ENCODE measurements at regions of chr11 and their contacts with region 1.

Region 1: DNA sequence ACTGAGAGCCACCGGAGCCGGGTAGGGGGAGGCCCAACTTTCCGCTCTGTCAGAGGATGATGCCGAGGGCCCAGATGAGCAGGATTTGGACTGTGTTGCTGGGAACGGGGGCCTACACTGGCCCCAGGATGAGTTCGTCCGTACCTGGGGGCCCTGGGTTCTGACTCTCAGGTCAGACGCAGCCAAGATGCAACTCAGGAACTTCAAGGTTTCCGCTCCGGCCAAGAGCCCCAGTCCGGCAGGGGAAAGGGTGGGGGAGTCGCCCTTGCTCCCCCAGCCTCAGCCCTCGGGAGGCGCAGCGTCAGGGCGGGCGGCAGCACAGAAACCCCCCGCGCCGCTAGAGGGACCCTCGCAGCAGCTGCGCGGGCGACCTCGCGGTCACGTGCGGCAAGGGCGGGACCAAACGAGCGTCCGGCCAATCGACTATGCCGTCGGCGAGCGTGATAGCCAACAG is 241 bp upstream of the ARL2 start:
- DNase-seq: peak; percentile 89 to 96 (median 93)
- H3K4me3 ChIP-seq: peak overlapping the region; percentile 60 to 99 (median 90)
- H3K27ac ChIP-seq: peak overlapping the region; percentile 90 to 100 (median 99)
- H3K27me3 ChIP-seq: no peaks in the 10 kb centered on the region
- CTCF ChIP-seq: peak in 44 of 56 donors; percentile 30 to 93 (median 74)

Region 2: DNA sequence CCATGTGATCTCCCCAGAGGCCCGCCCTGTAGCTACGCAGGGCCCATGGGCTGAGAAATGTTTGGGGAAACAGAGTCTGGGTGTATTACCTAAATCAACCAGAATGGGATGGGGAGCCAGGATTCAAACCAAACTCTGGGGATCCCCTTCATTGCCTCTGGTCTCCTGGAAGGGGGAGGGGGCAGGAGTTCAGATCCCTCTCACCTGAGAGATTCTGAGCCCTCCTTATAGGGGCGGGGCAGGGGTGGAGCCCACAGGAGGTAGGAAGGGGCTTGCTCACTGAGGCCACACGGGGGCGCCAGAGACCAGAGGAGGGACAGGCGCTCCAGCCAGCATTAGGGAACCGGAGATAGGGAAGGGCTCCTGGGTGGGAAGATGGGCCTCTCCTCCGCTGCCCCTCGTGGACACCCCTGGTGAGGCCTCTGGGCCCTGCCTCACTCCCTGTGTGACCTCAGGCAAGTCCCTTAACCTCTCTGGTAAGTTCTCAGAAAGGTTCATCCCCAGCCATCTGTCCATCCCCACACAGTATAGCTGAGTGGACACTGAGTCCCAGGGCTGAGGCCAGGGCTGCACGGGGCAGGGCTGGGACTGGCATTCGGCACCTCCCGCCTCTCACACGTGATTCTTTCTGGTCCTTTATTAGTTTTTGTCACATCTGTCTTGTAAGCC is 166.6 kb before region 1 on chr11:
- intact Hi-C with region 1: loop called (anchors 5 kb)
- DNase-seq: peak; percentile 81 to 98 (median 88)
- H3K4me3 ChIP-seq: peak overlapping the region in 6 of 59 donors; percentile 2 to 21 (median 10)
- H3K27ac ChIP-seq: peak overlapping the region in 3 of 59 donors; percentile 39 to 92 (median 60)
- H3K27me3 ChIP-seq: peaks cover 0 to 15% (median 0%) of the 10 kb centered on the region in 45 donors
- CTCF ChIP-seq: peak; percentile 86 to 100 (median 98)

Region 3: GRCh38 chr11:64924102-64924851 is 89.4 kb before region 1 on chr11 and contains the start of gene PPP2R5B:
- intact Hi-C with region 1: loop called (anchors 5 kb)
- DNase-seq: peak; percentile 93 to 98 (median 97)
- H3K4me3 ChIP-seq: peak within 1 kb of the TSS; percentile 71 to 100 (median 98)
- H3K27ac ChIP-seq: peak within 1 kb of the TSS; percentile 87 to 100 (median 98)
- H3K27me3 ChIP-seq: no peaks in the 10 kb centered on the region
- CTCF ChIP-seq: peak in 10 of 56 donors; percentile 9 to 37 (median 14)
- total RNA-seq, gene PPP2R5B: 64.5 to 119 (median 85.0) TPM

Region 4: DNA sequence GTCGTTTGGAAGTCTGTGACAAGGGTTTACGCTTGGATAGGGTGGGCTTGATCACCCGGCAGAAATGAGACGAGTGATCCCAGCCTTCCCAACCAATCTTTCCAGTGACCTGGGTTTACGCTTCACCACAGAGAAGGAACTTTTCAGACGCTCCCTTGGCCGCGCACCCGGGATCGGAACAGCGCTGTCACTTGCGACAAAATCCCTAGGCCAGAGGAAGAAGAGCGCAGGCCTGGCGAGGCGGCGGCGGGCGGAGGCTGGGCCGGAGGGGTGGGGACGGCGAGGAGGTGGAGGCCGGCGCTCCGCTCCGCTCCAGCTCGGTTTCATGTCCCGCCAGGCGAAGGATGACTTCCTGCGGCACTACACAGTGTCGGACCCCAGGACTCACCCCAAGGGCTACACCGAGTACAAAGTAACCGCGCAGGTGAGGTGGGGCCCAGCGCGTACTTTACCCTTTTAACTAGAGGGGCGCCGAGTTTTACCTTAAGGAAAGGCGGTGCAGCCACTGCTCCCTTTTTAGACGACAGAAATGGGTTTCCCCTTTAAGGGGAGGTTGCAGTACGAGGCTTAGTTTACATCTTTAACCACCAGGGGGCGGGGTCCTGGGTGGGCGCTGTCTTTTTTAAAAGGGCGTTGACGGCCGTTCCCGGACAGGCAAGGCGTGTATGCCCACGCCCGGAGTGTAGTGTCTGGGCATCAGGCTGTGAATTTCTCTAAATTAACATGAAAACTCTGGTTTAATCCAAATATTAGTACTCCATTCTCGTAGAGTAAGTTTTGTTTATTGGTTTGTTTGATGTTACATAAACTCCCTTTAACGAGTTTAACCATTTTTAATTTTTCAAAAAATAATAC is 13.7 kb after region 1 on chr11 and contains the start of gene SNX15:
- intact Hi-C with region 1: loop called in 1 of 2 experiments (anchors 1 kb)
- DNase-seq: peak; percentile 88 to 96 (median 94)
- H3K4me3 ChIP-seq: peak within 1 kb of the TSS; percentile 62 to 96 (median 77)
- H3K27ac ChIP-seq: peak within 1 kb of the TSS; percentile 48 to 99 (median 94)
- H3K27me3 ChIP-seq: no peaks in the 10 kb centered on the region
- CTCF ChIP-seq: peak; percentile 55 to 91 (median 78)
- total RNA-seq, gene SNX15: 24.6 to 49.9 (median 34.3) TPM

Region 5: GRCh38 chr11:65047581-65048422 is 34.1 kb after region 1 on chr11:
- intact Hi-C with region 1: no loop called
- DNase-seq: no peak
- H3K4me3 ChIP-seq: peak overlapping the region in 53 of 59 donors; percentile 11 to 59 (median 41)
- H3K27ac ChIP-seq: no peak overlapping the region
- H3K27me3 ChIP-seq: no peaks in the 10 kb centered on the region
- CTCF ChIP-seq: no peak

Region 6: DNA sequence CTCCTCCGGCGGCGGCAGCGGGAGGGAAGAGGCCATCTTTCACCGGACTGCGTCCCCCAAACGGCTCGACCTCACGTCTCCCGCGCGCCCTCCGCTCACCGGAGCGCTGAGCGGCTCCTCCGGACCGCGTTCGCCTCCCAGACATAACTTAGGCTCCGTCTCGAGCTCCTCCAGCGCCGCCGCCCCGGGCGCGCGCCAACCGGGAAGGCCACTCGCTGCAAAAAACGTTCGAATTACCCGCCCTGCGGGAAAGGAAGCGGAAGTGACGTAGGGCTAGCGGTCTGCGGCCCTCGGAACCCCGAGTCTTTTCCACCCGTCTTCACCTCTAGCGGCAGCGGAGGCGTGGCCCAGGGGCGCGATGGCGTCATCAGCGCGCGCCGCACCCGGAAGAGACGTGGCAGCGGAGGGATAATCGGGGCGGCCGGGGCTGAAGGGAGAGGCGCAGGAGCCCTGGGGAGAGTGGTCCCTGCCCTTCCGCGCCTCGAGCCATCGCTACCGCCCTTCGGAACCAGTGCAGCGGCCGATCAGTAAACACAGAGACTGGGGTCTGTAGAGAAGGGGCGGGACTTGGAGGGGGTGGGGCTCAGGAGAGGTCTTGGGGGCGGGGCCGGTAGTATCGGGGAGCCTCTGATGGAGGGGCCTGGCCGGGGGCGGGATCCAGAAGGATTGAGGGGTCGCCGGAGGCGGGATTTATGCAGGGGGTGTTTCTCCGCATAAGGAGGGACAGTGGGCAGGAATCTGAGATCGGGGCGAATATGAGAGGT is 70.3 kb after region 1 on chr11 and contains the starts of genes CDCA5 and ZFPL1:
- intact Hi-C with region 1: loop called (anchors 5 to 10 kb)
- DNase-seq: peak; percentile 95 to 99 (median 96)
- H3K4me3 ChIP-seq: peak within 1 kb of the TSS; percentile 54 to 100 (median 82)
- H3K27ac ChIP-seq: peak within 1 kb of the TSS; percentile 31 to 99 (median 88)
- H3K27me3 ChIP-seq: no peaks in the 10 kb centered on the region
- CTCF ChIP-seq: peak in 31 of 56 donors; percentile 5 to 60 (median 33)
- total RNA-seq, gene CDCA5: 1.3 to 8.1 (median 4.6) TPM
- total RNA-seq, gene ZFPL1: 27.8 to 62.4 (median 38.9) TPM

Region 7: DNA sequence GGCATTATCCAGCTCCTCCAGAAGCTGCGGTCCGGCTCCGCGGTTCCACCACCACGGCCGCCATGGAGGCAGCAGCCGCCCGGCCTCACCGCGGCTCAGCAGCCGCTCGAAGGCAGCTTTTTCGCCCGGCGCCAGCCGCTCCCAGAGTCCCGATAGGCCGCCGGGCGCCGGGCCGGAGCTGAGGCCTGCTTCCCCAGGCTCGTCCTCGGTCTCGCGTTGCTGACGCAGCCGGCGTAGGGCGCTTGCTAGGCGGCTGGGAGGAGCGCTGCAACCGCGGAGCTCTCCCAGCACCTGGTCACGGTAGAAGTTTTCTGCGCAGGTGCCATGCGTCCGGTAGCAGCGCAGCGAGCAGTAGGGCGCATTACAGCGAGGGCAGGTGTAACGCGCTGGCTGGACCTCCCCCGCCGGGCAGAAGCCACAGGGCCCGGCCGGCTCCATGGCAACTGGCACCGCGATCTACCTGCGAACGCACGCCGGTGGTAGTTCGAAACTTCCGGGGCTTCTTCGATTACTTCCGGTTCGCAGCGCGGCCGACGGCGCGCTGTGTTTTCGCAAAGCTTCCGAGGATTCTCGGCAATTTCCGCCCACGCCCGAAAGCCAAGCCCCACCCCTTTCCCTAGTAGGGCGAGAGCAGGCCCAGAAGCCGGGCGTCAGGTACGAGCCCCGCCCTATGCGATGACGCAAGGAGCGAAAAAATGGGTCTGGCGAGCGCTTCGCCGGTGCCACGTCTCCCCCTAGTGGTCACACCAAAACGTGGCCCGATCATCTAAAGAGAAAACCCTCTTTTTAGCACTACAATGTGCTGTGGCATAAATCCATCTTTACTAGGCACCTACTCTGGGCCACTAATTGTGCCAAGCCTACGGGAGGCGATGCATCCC is 103.7 kb after region 1 on chr11 and contains the start of gene ZNHIT2:
- intact Hi-C with region 1: loop called (anchors 2 kb)
- DNase-seq: peak; percentile 98 to 100 (median 99)
- H3K4me3 ChIP-seq: peak within 1 kb of the TSS; percentile 49 to 100 (median 88)
- H3K27ac ChIP-seq: peak within 1 kb of the TSS; percentile 49 to 95 (median 89)
- H3K27me3 ChIP-seq: no peaks in the 10 kb centered on the region
- CTCF ChIP-seq: peak; percentile 92 to 100 (median 98)
- total RNA-seq, gene ZNHIT2: 4.6 to 13.3 (median 8.5) TPM

Measured in dorsolateral prefrontal cortex (tissue), 120 donors.